Activated T-helper 2 cell treated with anti-CD3 and anti-CD28 coated beads, Interferon-gamma antibody, Interleukin-2, Interleukin-4, amounts not matched to agents 10 μg/mL and 5 μg/mL and 100 μg/mL, durations not matched to agents 14 hours and 24 hours and 36 hours (primary cell): ENCODE measurements at regions of chr5 and their contacts with region 1.

Region 1: GRCh38 chr5:154520861-154521453 is 42.9 kb upstream of the HAND1 start:
- DNase-seq: no peak
- H3K4me3 Mint-ChIP-seq: no peak overlapping the region
- H3K27ac Mint-ChIP-seq: no peak overlapping the region
- H3K4me1 Mint-ChIP-seq: no peaks in the 10 kb centered on the region
- H3K27me3 Mint-ChIP-seq: peaks cover 34% of the 10 kb centered on the region

Region 2: DNA sequence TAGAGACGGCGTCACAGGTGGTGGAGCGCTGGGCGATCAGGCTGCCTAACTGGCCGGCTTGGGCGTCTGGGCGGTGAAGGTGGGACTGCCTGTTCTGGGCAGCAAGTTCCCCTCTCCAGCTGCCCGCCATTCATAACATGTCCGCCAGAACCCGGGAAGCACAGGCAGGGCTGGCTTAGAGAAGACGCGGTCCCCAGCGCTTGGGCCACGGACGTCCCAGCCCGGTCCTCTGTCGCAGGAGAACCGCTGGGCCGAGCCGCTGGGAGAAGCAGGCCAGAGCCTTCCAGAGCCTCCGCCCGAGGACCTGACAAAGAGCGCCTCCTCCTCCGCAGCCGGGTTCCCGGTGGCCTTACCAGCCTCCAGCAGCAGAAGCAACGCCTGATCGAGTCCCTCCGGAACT is 27.7 kb before region 1 on chr5:
- intact Hi-C with region 1: no loop called
- DNase-seq: no peak
- H3K4me3 Mint-ChIP-seq: no peak overlapping the region
- H3K27ac Mint-ChIP-seq: no peak overlapping the region
- H3K4me1 Mint-ChIP-seq: peaks cover 1% of the 10 kb centered on the region
- H3K27me3 Mint-ChIP-seq: peaks cover 65% of the 10 kb centered on the region

Region 3: DNA sequence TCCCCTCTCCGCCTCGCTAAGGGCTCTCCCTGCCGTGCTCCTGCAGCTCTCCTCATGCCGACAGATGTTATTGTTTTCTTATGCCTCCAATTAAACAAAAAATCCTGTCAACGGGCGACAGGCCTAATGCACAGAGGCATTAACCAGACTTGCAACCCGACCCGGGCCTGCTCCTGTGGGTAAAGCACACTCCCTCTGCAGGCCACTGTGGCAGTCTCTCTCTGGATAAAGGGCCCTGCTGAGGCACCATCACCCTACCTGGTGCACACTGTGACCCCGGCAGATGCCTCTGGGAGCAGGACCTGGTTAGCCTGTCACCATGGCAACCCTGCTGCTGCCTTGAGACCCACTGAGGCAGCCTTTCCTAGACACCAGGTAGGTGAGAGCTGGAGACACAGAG is 15.3 kb before region 1 on chr5:
- intact Hi-C with region 1: no loop called
- DNase-seq: no peak
- H3K4me3 Mint-ChIP-seq: no peak overlapping the region
- H3K27ac Mint-ChIP-seq: no peak overlapping the region
- H3K4me1 Mint-ChIP-seq: peaks cover 3% of the 10 kb centered on the region
- H3K27me3 Mint-ChIP-seq: peaks cover 28% of the 10 kb centered on the region

Region 4: DNA sequence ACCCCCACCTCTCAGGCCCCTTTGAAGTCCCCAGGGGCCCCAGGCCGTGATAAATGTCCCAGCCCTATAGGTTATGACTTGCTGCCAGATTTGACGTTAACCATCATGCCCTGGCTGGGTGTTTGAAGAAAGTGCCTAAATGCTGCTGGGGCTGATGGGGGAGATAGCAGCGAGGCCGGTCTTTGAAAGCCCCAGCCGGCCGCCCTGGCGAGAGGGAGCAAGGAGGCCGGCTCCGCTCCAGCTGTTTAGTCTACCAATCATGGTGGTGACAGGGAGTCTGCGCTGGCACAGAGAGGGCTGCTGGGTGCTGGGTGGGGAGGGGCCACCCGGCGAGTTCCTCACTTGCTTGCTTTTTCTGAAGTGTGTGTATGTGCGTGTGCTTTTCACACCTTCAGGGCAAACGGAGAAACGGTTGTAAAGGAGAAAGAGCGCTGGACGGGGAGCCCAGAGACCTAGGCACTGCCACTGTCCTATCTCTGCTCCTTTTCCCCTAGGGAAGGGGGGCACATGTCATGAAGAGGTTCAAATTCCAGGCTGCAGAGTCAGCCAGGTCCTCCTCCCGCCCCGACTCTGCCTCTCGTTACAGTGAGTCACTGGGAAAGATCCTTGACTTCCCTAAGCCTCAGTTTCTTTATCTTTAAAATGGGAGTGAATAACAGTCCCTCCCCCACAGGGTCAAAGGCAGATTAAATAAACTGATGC is 83.2 kb after region 1 on chr5:
- intact Hi-C with region 1: loop called (anchors 10 kb)
- DNase-seq: no peak
- H3K4me3 Mint-ChIP-seq: no peak overlapping the region
- H3K27ac Mint-ChIP-seq: no peak overlapping the region
- H3K4me1 Mint-ChIP-seq: no peaks in the 10 kb centered on the region
- H3K27me3 Mint-ChIP-seq: peaks cover 48% of the 10 kb centered on the region